PC-3 (cell line): ENCODE measurements at regions of chr4 and their contacts with region 1.

Region 1: GRCh38 chr4:186852964-186853391 is 129.3 kb upstream of the FAT1 start:
- DNase-seq: no peak
- ATAC-seq: no peak
- H3K4me3 ChIP-seq: no peak overlapping the region
- H3K27ac ChIP-seq: no peak overlapping the region
- H3K4me1 ChIP-seq: no peaks in the 10 kb centered on the region
- H3K27me3 ChIP-seq: no peaks in the 10 kb centered on the region
- CTCF ChIP-seq: no peak

Region 2: DNA sequence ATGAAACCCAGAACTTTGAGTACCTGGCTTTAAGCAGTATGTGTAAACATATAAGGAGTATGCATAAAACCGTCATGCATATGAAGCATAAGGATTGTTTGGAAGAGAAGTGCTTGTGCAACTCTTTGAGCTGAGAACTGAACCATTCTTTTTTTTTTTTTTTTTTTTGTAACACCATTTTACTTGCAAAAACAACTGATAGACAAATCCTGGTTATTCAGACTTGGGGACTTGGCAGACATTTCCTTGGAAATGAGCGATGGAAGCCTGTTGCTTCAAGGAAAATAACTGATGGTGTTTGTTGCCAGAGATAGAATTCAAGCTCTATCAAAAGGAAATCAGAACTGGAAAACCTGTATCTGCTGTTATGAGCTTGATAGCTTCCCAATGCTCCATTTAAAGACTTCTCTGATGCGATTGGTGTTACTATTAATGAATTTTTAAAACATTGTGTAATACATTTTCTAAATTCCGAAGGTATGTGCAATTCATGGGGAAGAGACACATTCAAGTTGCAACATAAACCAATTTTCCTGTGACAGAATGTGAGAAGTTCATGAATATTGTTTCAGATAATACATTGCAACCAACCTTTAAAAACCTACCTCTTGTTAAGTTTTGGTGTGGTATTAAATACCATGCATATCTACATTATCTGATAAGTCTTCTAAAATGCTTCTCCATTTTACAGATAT is 82.3 kb before region 1 on chr4:
- CTCF ChIA-PET with region 1: interaction called, 10 read pairs
- POLR2A ChIA-PET with region 1: no interaction called
- intact Hi-C with region 1: no loop called
- DNase-seq: peak; percentile 20
- ATAC-seq: no peak
- H3K4me3 ChIP-seq: no peak overlapping the region
- H3K27ac ChIP-seq: no peak overlapping the region
- H3K4me1 ChIP-seq: peaks cover 7% of the 10 kb centered on the region; the same call in 1 of the 2 replicates
- H3K27me3 ChIP-seq: no peaks in the 10 kb centered on the region
- CTCF ChIP-seq: no peak

Region 3: GRCh38 chr4:187149229-187149945 is 296.4 kb after region 1 on chr4:
- CTCF ChIA-PET with region 1: no interaction called
- POLR2A ChIA-PET with region 1: no interaction called
- intact Hi-C with region 1: no loop called
- DNase-seq: no peak
- ATAC-seq: no peak
- H3K4me3 ChIP-seq: no peak overlapping the region
- H3K27ac ChIP-seq: no peak overlapping the region
- H3K4me1 ChIP-seq: no peaks in the 10 kb centered on the region
- H3K27me3 ChIP-seq: no peaks in the 10 kb centered on the region
- CTCF ChIP-seq: no peak